Colonic mucosa (tissue), 4 donors: ENCODE measurements at regions of chr1 and their contacts with region 1.

Region 1: GRCh38 chr1:1703796-1704195 is 11.2 kb upstream of the SLC35E2B start:
- DNase-seq: no peak
- H3K4me3 ChIP-seq: no peak overlapping the region
- H3K27ac ChIP-seq: no peak overlapping the region
- H3K4me1 ChIP-seq: no peaks in the 10 kb centered on the region
- H3K27me3 ChIP-seq: no peaks in the 10 kb centered on the region
- CTCF ChIP-seq: no peak

Region 2: GRCh38 chr1:1281533-1282321 is 422.1 kb before region 1 on chr1:
- intact Hi-C with region 1: no loop called
- DNase-seq: peak; percentile 93
- H3K4me3 ChIP-seq: no peak overlapping the region
- H3K27ac ChIP-seq: peak overlapping the region; percentile 61
- H3K4me1 ChIP-seq: peaks cover 13% of the 10 kb centered on the region
- H3K27me3 ChIP-seq: peaks cover 12% of the 10 kb centered on the region
- CTCF ChIP-seq: no peak

Region 3: GRCh38 chr1:1349256-1350012 is 354.4 kb before region 1 on chr1 and contains the start of gene DVL1:
- intact Hi-C with region 1: no loop called
- DNase-seq: peak; percentile 76
- H3K4me3 ChIP-seq: peak within 1 kb of the TSS; percentile 59
- H3K27ac ChIP-seq: peak within 1 kb of the TSS; percentile 79
- H3K4me1 ChIP-seq: peaks cover 17% of the 10 kb centered on the region
- H3K27me3 ChIP-seq: peaks cover 14% of the 10 kb centered on the region
- CTCF ChIP-seq: peak; percentile 25
- total RNA-seq, gene DVL1: 49.9 to 71.3 TPM

Region 4: GRCh38 chr1:1748686-1749321 is 45.0 kb after region 1 on chr1:
- intact Hi-C with region 1: loop called (anchors 10 kb)
- DNase-seq: no peak
- H3K4me3 ChIP-seq: no peak overlapping the region
- H3K27ac ChIP-seq: no peak overlapping the region
- H3K4me1 ChIP-seq: no peaks in the 10 kb centered on the region
- H3K27me3 ChIP-seq: no peaks in the 10 kb centered on the region
- CTCF ChIP-seq: no peak

Region 5: GRCh38 chr1:1890506-1891348 is 186.9 kb after region 1 on chr1 and contains the start of gene GNB1:
- intact Hi-C with region 1: no loop called
- DNase-seq: peak; percentile 86
- H3K4me3 ChIP-seq: peak within 1 kb of the TSS; percentile 88
- H3K27ac ChIP-seq: peak within 1 kb of the TSS; percentile 80
- H3K4me1 ChIP-seq: peaks cover 39% of the 10 kb centered on the region
- H3K27me3 ChIP-seq: no peaks in the 10 kb centered on the region
- CTCF ChIP-seq: no peak
- total RNA-seq, gene GNB1: 281 to 367 TPM